ENCODE measurements at regions of chr10 and their contacts with region 1.

Region 1: DNA sequence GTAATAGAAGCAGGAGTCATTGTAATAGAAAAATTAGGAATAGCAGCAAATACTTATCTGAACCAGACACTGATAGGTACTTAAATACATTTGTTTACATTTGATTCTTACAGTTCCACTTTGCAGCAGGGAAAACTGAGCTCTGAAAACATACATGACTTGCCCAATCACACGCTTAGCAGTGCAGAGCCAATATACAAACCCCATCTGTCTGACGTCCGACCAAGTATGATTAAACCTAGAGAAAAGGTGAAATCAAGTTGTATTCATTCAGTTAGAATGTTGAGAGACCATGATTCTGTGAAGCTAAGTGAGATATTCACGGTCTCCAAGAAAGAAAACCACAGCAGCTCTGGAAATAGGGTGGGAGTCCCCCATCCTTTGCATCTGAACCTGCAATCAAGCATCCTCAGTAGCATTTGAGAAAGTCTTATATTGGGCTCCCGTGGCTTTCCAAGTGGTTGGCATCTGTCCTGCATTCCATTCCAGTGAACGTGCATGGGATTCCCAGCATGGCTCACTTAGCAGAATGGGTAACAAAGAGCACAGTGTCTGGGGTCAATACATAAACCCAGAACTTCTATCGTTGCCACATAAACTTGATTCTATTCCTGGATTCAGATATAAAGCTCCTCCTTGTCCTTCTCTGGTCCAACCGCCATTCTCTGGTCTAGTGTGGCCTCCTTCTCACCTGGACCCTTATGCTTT is 148.7 kb upstream of the RSU1 start:
- DNase-seq: peak; percentile 91
- H3K4me3 ChIP-seq: no peak overlapping the region
- H3K27ac ChIP-seq: peak overlapping the region; percentile 98
- H3K4me1 ChIP-seq: peaks cover 40% of the 10 kb centered on the region
- H3K27me3 ChIP-seq: no peaks in the 10 kb centered on the region
- CTCF ChIP-seq: no peak
- POLR2A ChIP-seq: peak; percentile 44

Region 2: GRCh38 chr10:16891375-16892313 is 74.2 kb before region 1 on chr10:
- CTCF ChIA-PET with region 1: interaction called, 11 read pairs
- POLR2A ChIA-PET with region 1: interaction called, 3 read pairs
- dilution Hi-C with region 1: no loop called
- intact Hi-C with region 1: loop called (anchors 1 kb)
- DNase-seq: peak; percentile 70
- H3K4me3 ChIP-seq: no peak overlapping the region
- H3K27ac ChIP-seq: peak overlapping the region; percentile 5
- H3K4me1 ChIP-seq: peaks cover 8% of the 10 kb centered on the region
- H3K27me3 ChIP-seq: no peaks in the 10 kb centered on the region
- CTCF ChIP-seq: peak; percentile 45 to 58
- POLR2A ChIP-seq: peak; percentile 94

Region 3: GRCh38 chr10:16944402-16944801 is 21.5 kb before region 1 on chr10:
- CTCF ChIA-PET with region 1: interaction called, 5 read pairs
- POLR2A ChIA-PET with region 1: no interaction called
- dilution Hi-C with region 1: no loop called
- intact Hi-C with region 1: loop called (anchors 1 kb)
- DNase-seq: peak; percentile 65
- H3K4me3 ChIP-seq: no peak overlapping the region
- H3K27ac ChIP-seq: peak overlapping the region; percentile 59
- H3K4me1 ChIP-seq: peaks cover 20% of the 10 kb centered on the region
- H3K27me3 ChIP-seq: no peaks in the 10 kb centered on the region
- CTCF ChIP-seq: no peak
- POLR2A ChIP-seq: no peak

Region 4: GRCh38 chr10:16986406-16987205 is 20.7 kb after region 1 on chr10:
- CTCF ChIA-PET with region 1: interaction called, 11 read pairs
- POLR2A ChIA-PET with region 1: interaction called, 8 read pairs
- dilution Hi-C with region 1: no loop called
- intact Hi-C with region 1: loop called (anchors 1 kb)
- DNase-seq: peak; percentile 88
- H3K4me3 ChIP-seq: no peak overlapping the region
- H3K27ac ChIP-seq: peak overlapping the region; percentile 96
- H3K4me1 ChIP-seq: peaks cover 27% of the 10 kb centered on the region
- H3K27me3 ChIP-seq: no peaks in the 10 kb centered on the region
- CTCF ChIP-seq: no peak
- POLR2A ChIP-seq: no peak

Region 5: GRCh38 chr10:17029581-17030271 is 63.8 kb after region 1 on chr10:
- CTCF ChIA-PET with region 1: interaction called, 6 read pairs
- POLR2A ChIA-PET with region 1: interaction called, 3 read pairs
- dilution Hi-C with region 1: no loop called
- intact Hi-C with region 1: loop called (anchors 1 kb)
- DNase-seq: peak; percentile 96
- H3K4me3 ChIP-seq: peak overlapping the region in 1 of 3 experiments; percentile 34
- H3K27ac ChIP-seq: peak overlapping the region; percentile 99
- H3K4me1 ChIP-seq: peaks cover 59% of the 10 kb centered on the region
- H3K27me3 ChIP-seq: no peaks in the 10 kb centered on the region
- CTCF ChIP-seq: no peak
- POLR2A ChIP-seq: peak; percentile 71

Region 6: DNA sequence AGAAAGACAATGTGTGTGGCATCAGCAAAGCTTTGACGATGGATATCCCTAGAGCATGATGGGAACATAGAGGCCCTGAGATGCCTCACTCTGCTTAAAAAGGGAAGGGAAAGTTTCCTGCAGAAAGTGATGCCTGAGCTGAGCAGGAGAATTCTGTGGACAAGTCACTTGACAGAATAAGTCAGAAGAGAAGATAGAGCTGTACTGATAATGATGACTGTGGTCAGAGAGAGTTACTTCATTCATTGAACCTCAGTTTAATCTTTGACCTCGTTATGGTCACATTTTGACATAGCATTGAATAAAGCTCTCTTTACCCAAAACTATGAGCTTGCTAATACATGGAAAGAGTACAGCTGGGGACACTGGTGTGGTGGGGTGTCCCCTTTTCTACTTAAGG is 156.2 kb after region 1 on chr10:
- CTCF ChIA-PET with region 1: no interaction called
- POLR2A ChIA-PET with region 1: no interaction called
- dilution Hi-C with region 1: no loop called
- intact Hi-C with region 1: no loop called
- DNase-seq: no peak
- H3K4me3 ChIP-seq: no peak overlapping the region
- H3K27ac ChIP-seq: no peak overlapping the region
- H3K4me1 ChIP-seq: no peaks in the 10 kb centered on the region
- H3K27me3 ChIP-seq: no peaks in the 10 kb centered on the region
- CTCF ChIP-seq: no peak
- POLR2A ChIP-seq: no peak

Region 7: DNA sequence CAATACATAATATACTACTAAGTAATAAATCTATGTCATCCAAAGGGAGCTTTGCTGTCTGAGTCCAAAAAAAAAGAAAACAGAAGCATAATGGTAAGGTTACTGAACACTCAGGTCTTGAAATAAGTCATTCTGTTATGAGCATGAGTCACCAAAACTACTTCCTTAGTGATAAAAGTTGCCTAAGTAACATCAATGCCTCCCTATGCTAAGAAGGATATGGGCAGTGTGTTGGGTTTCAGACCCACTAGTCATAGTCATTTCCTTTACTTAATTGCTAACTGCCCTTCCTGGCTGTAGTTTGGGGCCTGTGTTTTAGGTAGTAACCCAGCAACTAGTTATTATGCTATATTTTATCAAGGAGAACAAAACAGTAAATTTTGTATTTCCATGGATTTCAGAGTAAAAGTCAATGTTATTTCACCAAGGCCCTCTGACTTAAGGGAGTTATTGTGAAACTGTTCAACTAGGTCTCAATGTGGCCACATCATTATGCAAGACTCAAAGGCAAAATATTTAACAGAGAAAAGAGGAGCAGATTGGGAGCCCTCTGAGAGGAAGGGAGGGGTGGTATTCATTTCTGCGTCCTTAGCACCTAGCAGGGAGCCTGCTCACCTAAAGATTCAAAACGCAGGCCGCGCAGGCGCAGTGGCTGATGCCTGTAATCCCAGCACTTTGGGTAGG is 250.5 kb after region 1 on chr10:
- CTCF ChIA-PET with region 1: no interaction called
- POLR2A ChIA-PET with region 1: no interaction called
- dilution Hi-C with region 1: no loop called
- intact Hi-C with region 1: loop called (anchors 1 kb)
- DNase-seq: peak; percentile 98
- H3K4me3 ChIP-seq: peak overlapping the region in 1 of 3 experiments; percentile 3
- H3K27ac ChIP-seq: peak overlapping the region; percentile 99
- H3K4me1 ChIP-seq: peaks cover 33% of the 10 kb centered on the region
- H3K27me3 ChIP-seq: no peaks in the 10 kb centered on the region
- CTCF ChIP-seq: no peak
- POLR2A ChIP-seq: peak; percentile 77

Measured in endothelial cell of umbilical vein (primary cell).